ENCODE measurements at regions of chr1 and their contacts with region 1.

Region 1: DNA sequence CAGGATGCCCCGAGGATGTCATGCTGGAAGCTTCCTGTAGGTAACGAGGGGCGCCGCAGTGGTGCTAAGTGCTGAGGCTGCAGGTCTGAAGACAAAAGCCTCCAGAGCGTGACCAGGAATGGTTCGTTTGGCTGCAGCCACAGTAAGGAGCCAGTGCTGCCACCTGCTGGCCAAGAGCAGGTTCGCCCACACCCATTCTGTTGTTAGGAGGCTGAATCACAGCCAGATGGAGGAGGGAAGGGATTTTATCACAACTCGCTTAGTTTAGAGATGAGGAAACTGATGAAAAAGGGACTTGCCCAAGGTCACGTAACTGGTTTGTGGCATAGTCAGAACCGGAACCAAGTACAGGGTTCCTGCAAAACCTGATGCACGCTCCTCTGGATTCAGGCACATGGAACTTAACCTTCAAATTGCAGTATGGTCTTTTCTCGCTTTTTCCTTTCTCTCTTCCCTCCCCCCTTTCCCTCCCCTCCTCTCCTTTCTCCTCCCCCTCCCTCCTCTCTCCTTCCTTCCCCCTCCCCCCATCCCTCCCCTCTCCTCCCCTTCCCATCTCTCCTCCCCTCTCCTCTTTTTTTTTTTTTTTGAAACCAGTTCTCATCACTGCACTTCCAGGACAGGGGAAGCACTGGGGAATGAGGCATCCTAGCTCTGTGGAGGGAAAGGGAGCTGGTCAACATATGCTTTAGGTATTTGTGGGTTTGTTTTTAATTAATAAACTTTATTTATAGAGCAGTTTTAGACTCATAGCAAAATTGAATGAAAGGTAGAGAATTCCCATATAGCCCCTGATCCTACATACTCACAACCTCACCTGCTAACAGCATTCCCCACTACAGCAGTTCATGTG is 81.8 kb downstream of the MPZL1 start:
- DNase-seq: peak; percentile 41 to 83 (median 67)
- ATAC-seq: peak; percentile 95
- H3K4me3 ChIP-seq: no peak overlapping the region
- H3K4me3 Mint-ChIP-seq: peak overlapping the region in 9 of 10 donors; percentile 5 to 74 (median 60)
- H3K27ac ChIP-seq: no peak overlapping the region
- H3K27ac Mint-ChIP-seq: peak overlapping the region in 6 of 9 donors; percentile 38 to 93 (median 83)
- H3K4me1 ChIP-seq: peaks cover 20 to 21% of the 10 kb centered on the region in 2 donors
- H3K4me1 Mint-ChIP-seq: peaks cover 16 to 29% (median 26%) of the 10 kb centered on the region in 7 donors
- H3K27me3 ChIP-seq: no peaks in the 10 kb centered on the region
- H3K27me3 Mint-ChIP-seq: peaks cover 0 to 7% (median 0%) of the 10 kb centered on the region in 5 donors

Region 2: GRCh38 chr1:167627865-167628641 is 175.5 kb before region 1 on chr1:
- CTCF ChIA-PET with region 1: no interaction called
- POLR2A ChIA-PET with region 1: no interaction called
- intact Hi-C with region 1: loop called in 1 of 2 experiments (anchors 10 kb)
- DNase-seq: peak; percentile 33 to 84 (median 73)
- ATAC-seq: peak; percentile 84
- H3K4me3 ChIP-seq: peak overlapping the region; percentile 48
- H3K4me3 Mint-ChIP-seq: peak overlapping the region; percentile 82 to 99 (median 92)
- H3K27ac ChIP-seq: peak overlapping the region; percentile 94
- H3K27ac Mint-ChIP-seq: peak overlapping the region; percentile 85 to 98 (median 95)
- H3K4me1 ChIP-seq: peaks cover 44 to 46% of the 10 kb centered on the region in 2 donors
- H3K4me1 Mint-ChIP-seq: peaks cover 48 to 69% (median 63%) of the 10 kb centered on the region in 7 donors
- H3K27me3 ChIP-seq: no peaks in the 10 kb centered on the region
- H3K27me3 Mint-ChIP-seq: no peaks in the 10 kb centered on the region

Region 3: DNA sequence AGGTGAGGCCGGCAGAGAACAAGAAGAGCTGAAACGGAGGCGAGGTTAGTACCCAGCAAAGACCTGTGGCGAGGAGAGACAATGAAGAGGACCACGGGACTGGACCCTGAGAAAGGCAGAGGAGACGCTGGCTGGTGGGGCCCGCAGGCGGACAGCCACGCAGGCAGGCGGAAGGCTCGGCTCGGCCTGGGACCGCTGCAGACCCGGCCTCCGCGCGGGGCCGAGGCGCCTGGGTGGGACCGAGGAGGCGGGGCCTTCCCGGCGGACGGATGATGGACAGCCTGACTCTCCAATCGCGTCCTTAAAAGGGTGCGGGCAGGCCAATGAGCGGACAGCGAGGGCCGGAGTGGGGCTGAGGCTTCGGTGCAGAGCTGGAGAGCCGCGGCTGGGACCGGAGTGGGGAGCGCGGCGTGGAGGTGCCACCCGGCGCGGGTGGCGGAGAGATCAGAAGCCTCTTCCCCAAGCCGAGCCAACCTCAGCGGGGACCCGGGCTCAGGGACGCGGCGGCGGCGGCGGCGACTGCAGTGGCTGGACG is 81.9 kb before region 1 on chr1 and contains the start of gene MPZL1:
- CTCF ChIA-PET with region 1: no interaction called
- POLR2A ChIA-PET with region 1: no interaction called
- intact Hi-C with region 1: loop called (anchors 1 kb)
- DNase-seq: peak; percentile 81 to 96 (median 88)
- ATAC-seq: peak; percentile 99
- H3K4me3 ChIP-seq: peak within 1 kb of the TSS; percentile 64
- H3K4me3 Mint-ChIP-seq: peak within 1 kb of the TSS; percentile 85 to 96 (median 91)
- H3K27ac ChIP-seq: peak within 1 kb of the TSS; percentile 70
- H3K27ac Mint-ChIP-seq: peak within 1 kb of the TSS; percentile 75 to 95 (median 86)
- H3K4me1 ChIP-seq: peaks cover 5 to 18% of the 10 kb centered on the region in 2 donors
- H3K4me1 Mint-ChIP-seq: peaks cover 35 to 76% (median 65%) of the 10 kb centered on the region in 7 donors
- H3K27me3 ChIP-seq: no peaks in the 10 kb centered on the region
- H3K27me3 Mint-ChIP-seq: peaks cover 0 to 5% (median 0%) of the 10 kb centered on the region in 5 donors
- total RNA-seq, gene MPZL1: 4.8 to 25.3 (median 8.6) TPM

Region 4: DNA sequence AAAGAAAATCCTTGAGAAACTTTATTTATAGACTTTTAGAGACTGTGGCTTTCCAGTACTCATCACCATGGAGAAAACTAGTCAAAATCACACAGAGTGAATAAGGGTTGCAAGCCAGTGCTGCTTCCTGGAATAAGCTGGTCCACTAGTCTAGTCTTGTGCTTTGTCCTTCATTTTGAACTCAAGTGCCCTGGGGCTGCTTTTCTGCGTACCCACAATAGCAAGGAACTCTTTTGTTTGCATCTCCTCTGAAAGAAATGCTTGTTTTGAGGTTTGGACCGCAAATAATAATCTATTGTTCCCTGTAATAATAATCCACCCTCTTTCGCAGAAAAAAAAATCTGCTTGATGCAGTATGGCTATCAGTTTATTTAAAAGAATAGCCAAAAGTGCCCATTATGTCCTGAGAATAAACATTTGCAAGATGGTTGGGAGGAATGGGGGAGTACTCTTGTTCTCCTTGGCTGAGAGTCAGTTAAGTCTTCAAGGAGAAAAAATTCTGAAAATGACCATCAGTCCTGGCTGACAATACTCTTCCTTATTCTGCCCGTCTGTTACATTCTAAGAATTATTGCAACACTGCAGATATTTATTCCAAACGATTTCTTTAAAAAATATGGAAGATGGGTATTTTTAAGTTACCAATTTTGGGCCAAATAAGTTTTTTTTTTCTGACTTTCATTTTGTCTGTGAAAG is 39.9 kb before region 1 on chr1:
- CTCF ChIA-PET with region 1: no interaction called
- POLR2A ChIA-PET with region 1: no interaction called
- intact Hi-C with region 1: loop called in 1 of 2 experiments (anchors 2 kb)
- DNase-seq: no peak
- ATAC-seq: no peak
- H3K4me3 ChIP-seq: no peak overlapping the region
- H3K4me3 Mint-ChIP-seq: no peak overlapping the region
- H3K27ac ChIP-seq: no peak overlapping the region
- H3K27ac Mint-ChIP-seq: no peak overlapping the region
- H3K4me1 ChIP-seq: peaks cover 0 to 17% of the 10 kb centered on the region in 2 donors
- H3K4me1 Mint-ChIP-seq: peaks cover 24 to 41% (median 27%) of the 10 kb centered on the region in 7 donors
- H3K27me3 ChIP-seq: no peaks in the 10 kb centered on the region
- H3K27me3 Mint-ChIP-seq: no peaks in the 10 kb centered on the region

Region 5: DNA sequence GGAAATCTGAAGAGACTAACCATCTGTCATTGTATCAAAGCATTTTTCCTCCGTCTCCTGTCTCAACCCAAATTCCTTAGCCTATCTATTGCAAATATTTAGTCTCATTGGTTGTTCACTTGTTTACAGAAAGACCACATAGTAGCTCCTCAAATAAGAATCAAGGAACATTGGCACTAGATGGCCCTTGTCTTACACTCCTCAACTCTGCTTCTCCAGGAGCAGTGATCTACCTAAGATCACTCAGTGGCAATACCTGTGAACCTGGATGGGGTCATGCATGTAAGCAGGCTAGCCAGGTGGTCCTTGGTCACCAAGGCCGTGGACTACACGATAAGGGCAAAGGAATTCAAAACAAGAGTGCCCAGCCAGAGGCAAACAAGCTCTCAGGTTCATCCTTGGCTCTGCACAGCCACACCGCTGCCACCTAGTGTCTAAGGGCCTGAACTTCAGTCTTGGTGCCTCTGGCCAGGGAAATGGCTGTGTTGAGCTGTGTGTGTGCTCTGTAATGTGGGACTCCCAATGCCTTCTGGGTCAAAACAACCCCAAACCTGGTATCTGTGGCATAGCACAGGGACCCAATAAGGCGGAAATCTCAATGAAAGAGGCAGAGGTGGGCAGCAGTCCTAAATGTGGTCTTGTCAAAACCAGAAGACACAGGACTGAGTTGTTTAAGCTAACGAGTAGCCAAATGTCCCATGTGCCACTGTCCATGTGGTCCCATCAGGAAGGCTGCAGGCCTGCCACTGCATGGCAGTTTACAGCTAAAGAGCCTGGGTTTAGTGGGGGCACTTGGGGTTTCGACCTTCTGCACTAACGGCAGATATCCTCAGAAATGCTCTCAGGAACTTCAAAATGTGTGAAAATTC is 278.7 kb after region 1 on chr1:
- CTCF ChIA-PET with region 1: no interaction called
- POLR2A ChIA-PET with region 1: no interaction called
- intact Hi-C with region 1: loop called (anchors 2 to 10 kb)
- DNase-seq: peak in 8 of 9 donors; percentile 29 to 66 (median 48)
- ATAC-seq: peak; percentile 83
- H3K4me3 ChIP-seq: no peak overlapping the region
- H3K4me3 Mint-ChIP-seq: no peak overlapping the region
- H3K27ac ChIP-seq: no peak overlapping the region
- H3K27ac Mint-ChIP-seq: peak overlapping the region in 1 of 9 donors; percentile 54
- H3K4me1 ChIP-seq: no peaks in the 10 kb centered on the region
- H3K4me1 Mint-ChIP-seq: peaks cover 0 to 12% (median 0%) of the 10 kb centered on the region in 7 donors
- H3K27me3 ChIP-seq: no peaks in the 10 kb centered on the region
- H3K27me3 Mint-ChIP-seq: no peaks in the 10 kb centered on the region